Testis (tissue), 5 donors: ENCODE measurements at regions of chr1 and their contacts with region 1.

Region 1: DNA sequence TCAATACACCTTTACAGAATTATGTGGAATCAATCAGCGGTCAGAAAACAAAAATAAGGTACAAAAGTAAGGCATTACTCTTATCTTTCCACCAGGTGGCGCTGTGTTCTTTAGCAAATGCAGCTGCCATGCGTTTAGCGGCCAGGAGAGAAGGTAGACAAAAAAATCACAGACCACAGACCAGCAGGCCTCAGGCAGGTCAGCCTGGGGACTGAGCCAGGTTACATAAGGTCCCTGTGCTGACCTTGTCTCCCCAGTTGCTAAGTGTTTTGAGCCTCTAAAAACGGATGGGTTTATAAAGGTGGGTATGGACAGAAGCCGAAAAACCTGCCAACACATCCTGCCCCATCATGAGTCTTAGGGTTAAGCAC is 2.8 kb downstream of the RGS16 start:
- DNase-seq: peak; percentile 75
- H3K4me3 ChIP-seq: no peak overlapping the region
- H3K27ac ChIP-seq: peak overlapping the region in 1 of 2 donors; percentile 18
- H3K4me1 ChIP-seq: peaks cover 14% of the 10 kb centered on the region
- H3K27me3 ChIP-seq: no peaks in the 10 kb centered on the region
- CTCF ChIP-seq: peak; percentile 96 to 98 (median 97)
- POLR2A ChIP-seq: no peak

Region 2: DNA sequence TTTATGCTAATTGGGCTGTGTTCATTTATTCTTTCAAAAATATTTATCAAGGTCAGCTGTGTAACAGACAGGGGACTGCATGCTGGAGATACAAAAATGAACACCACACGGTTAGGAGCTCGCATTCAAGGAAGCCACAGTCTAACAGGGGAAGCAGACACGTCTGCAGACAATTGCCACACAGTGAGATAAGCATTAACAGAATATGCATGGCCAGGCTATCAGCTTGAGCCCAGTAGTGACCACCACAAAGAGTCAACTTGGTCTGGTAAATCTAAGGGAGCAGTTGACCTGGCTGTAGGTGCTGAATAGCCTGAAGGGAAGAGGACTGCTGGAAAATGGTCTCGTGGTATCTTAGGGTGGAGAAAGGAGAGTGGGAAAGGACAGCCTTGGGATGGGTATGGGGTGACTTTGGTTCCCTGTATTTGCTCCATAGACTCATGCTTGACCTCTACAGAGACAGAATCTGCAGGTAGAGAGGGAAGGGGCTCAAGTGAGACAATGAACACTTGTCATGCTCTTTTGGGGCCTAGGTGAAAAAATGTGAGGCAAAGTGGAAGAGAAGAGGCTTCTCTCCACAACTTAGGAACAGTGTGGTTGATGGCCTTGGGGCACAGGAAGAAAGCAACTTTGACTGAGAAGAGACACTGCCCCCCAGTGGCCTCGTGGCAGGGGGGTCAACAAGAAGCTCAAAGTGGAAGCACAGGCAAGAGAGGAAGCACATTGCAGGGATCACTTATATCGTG is 180.6 kb after region 1 on chr1:
- intact Hi-C with region 1: loop called (anchors 2 kb)
- DNase-seq: peak; percentile 81
- H3K4me3 ChIP-seq: no peak overlapping the region
- H3K27ac ChIP-seq: no peak overlapping the region
- H3K4me1 ChIP-seq: no peaks in the 10 kb centered on the region
- H3K27me3 ChIP-seq: no peaks in the 10 kb centered on the region
- CTCF ChIP-seq: peak; percentile 18 to 61 (median 39)
- POLR2A ChIP-seq: no peak